A549 (cell line): ENCODE measurements at regions of chr11 and their contacts with region 1.

Region 1: GRCh38 chr11:73760679-73761402 is at the start of gene RAB6A:
- DNase-seq: peak; percentile 96 to 99
- ATAC-seq: peak; percentile 87 to 92
- H3K4me3 ChIP-seq: peak within 1 kb of the TSS; percentile 94
- H3K27ac ChIP-seq: peak within 1 kb of the TSS; percentile 91 to 98
- H3K4me1 ChIP-seq: peaks cover 23% of the 10 kb centered on the region; the same call in 2 of the 3 replicates
- CTCF ChIP-seq: no peak
- EP300 ChIP-seq: no peak
- POLR2A ChIP-seq: peak; percentile 86
- RAD21 ChIP-seq: peak in 1 of 2 experiments; percentile 17; a peak in 1 of 5 replicates
- polyA plus RNA-seq, gene RAB6A: 95.3 and 141 TPM in 2 replicates

Region 2: DNA sequence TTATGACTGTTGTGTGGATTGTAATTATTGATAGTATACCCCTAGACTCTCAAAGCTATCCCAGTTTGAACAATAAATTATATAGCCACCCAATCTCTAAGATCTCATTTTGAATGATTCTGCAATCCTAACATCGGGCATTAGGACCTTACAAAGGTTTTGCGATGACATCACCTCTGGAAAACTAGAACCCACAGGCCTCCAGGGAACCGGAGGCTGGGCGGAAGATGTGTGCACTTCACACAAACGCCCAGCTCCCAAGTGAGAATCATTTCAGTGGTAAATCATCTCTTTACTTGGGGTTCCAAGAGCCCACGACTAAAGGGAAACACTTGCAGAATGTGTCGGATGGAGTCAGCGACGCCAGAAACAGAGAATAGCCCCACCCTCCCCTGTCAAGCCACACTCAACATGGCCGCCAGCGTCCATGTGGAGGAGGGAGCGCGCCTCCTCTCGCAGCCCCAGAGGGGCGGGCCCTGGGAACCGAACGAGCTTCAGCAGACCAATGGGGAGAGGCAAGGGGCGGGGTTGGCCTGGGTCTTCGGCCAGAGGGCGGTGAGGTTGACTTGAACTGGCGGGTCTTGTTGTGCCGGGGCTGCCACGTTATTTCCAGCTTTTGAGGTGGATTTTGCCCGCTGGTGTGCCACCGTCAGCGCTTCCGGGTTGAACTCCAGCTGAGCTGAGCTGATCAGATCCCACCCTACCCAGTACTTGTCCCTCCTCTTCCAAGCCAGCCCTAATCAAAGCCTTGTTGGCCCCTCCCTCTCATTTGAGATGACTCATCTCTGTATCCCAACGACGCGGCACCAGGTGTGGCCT is 18.5 kb after region 1 on chr11:
- CTCF ChIA-PET with region 1: interaction called, 19 read pairs
- POLR2A ChIA-PET with region 1: interaction called, 89 read pairs
- DNase-seq: peak; percentile 97 to 99
- ATAC-seq: peak; percentile 99
- H3K4me3 ChIP-seq: peak overlapping the region; percentile 40
- H3K27ac ChIP-seq: peak overlapping the region; percentile 80 to 91
- H3K4me1 ChIP-seq: peaks cover 15% of the 10 kb centered on the region; the same call in 2 of the 3 replicates
- CTCF ChIP-seq: no peak
- EP300 ChIP-seq: no peak
- POLR2A ChIP-seq: peak; percentile 48
- RAD21 ChIP-seq: no peak

Region 3: GRCh38 chr11:73787643-73788537 is 27.0 kb after region 1 on chr11 and contains the start of gene MRPL48:
- CTCF ChIA-PET with region 1: interaction called, 6 read pairs
- POLR2A ChIA-PET with region 1: interaction called, 43 read pairs
- DNase-seq: peak; percentile 98
- ATAC-seq: peak; percentile 99
- H3K4me3 ChIP-seq: peak within 1 kb of the TSS; percentile 78
- H3K27ac ChIP-seq: peak within 1 kb of the TSS; percentile 91 to 96
- H3K4me1 ChIP-seq: peaks cover 30% of the 10 kb centered on the region; the same call in 2 of the 3 replicates
- CTCF ChIP-seq: no peak
- EP300 ChIP-seq: no peak
- POLR2A ChIP-seq: peak; percentile 73
- RAD21 ChIP-seq: peak in 1 of 2 experiments; percentile 14; a peak in 1 of 5 replicates
- polyA plus RNA-seq, gene MRPL48: 103 and 104 TPM in 2 replicates

Region 4: GRCh38 chr11:74238243-74238642 is 477.4 kb after region 1 on chr11:
- CTCF ChIA-PET with region 1: no interaction called
- POLR2A ChIA-PET with region 1: no interaction called
- DNase-seq: no peak
- ATAC-seq: no peak
- H3K4me3 ChIP-seq: no peak overlapping the region
- H3K27ac ChIP-seq: no peak overlapping the region
- H3K4me1 ChIP-seq: no peaks in the 10 kb centered on the region
- CTCF ChIP-seq: no peak
- EP300 ChIP-seq: no peak
- POLR2A ChIP-seq: no peak
- RAD21 ChIP-seq: no peak